ENCODE measurements at regions of chr1 and their contacts with region 1.

Region 1: GRCh38 chr1:42173155-42173933 is 8.8 kb upstream of the GUCA2A start:
- DNase-seq: peak; percentile 76
- ATAC-seq: peak; percentile 52

Region 2: DNA sequence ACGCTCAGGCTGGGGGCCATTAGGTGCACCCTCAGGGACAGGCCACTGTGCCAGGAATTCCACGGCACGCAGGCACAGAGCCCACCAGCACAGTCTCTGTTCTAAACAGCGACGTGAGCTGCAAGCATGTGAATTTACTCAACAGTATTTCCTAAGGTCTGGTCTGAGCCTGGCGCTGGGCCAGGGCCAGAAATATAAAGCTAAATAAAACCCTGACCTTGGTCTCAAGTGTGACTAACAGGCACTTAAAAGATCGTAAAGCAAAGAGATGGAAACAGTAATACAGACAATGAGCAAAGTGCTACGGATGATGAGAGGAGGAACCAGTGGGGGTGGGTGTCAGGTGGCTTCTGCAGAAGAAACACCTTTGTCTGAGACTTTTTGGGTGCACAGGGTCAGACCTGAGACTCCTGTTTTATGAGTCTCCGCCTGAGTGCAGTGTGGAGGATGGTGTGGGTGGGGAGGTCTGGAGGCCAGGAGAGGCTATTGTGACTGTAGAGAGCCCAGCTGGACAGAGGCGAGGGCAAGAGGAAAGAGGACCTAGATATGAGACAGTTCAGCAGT is 635.5 kb before region 1 on chr1:
- intact Hi-C with region 1: no loop called
- DNase-seq: peak; percentile 84
- ATAC-seq: peak; percentile 77

Region 3: DNA sequence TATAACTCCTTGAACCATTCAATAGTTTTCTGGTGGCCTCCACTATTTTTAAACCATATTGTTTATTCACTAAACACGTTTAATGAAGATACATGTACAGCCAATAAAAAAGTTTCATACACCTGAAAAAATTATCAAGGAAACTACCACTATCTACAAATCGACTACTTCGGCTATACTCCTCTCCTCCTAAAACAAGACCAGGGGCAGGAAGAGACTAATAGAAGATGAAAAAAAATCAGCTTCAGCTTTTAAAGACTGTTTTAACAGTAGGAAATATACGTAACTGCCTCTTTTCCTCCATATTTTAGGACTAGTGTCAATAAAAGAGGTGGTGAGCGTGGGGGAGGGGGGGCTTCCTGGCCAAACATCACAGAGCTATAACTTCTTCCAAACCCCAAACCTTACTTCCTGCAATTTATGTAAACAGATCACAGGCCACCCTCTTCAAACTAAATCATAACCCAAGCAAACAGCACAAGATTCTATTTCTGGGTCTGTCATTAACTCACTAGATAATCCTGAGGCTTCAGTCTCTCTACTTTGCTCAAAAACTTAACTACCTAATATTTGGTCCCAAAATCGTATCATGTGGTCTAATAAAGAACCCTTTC is 146.6 kb after region 1 on chr1:
- intact Hi-C with region 1: loop called (anchors 10 kb)
- DNase-seq: no peak
- ATAC-seq: peak; percentile 53